ENCODE measurements at regions of chr6 and their contacts with region 1.

Region 1: GRCh38 chr6:80106418-80107235 is at the start of gene BCKDHB:
- DNase-seq: peak; percentile 99
- H3K4me3 ChIP-seq: peak within 1 kb of the TSS; percentile 94
- H3K27ac ChIP-seq: peak within 1 kb of the TSS; percentile 46
- H3K4me1 ChIP-seq: peaks cover 14% of the 10 kb centered on the region
- CTCF ChIP-seq: no peak
- total RNA-seq, gene BCKDHB: 25.0 and 30.3 TPM in 2 replicates

Region 2: DNA sequence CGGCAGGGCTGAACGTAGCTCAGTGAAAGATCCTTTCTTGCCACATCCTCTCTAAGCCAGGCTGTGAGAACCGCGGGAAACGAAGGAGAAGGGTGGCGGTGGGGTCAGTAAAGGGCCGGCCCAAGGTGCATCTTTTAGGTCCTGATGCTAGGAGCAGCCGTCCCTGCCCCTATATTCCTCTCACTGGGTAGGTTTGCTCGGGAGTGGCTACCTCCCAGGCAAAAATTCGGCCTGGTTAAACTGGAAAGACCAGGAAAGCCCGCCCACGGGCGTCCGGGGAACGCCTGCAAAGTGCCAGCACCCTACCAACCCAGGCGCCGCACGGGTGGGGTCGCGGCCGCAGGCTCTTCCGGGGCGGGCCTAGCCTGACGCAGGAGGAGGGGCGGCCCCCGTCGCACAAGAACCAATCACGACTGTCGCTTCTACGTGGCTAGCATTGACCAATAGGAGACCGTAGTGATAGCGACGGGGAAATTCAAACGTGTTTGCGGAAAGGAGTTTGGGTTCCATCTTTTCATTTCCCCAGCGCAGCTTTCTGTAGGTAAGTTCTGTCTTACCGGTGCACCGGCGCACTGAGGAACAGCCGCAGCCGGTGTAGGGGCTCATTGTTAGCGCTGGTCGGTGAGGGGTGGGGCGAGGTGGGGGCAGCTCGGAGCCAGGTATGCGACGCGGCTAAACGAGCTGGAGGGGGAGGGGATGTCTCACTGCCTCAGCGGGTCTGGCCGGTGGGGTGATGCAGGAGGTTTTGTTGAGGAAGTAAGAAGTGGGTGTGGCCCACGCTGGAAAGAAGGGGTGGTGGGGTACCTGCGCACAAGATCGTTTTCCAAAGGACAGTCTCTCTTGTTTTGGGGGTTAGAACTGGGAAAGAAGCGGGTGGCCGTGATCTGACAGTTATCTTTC is 102.2 kb before region 1 on chr6 and contains the start of gene TTK:
- CTCF ChIA-PET with region 1: no interaction called
- POLR2A ChIA-PET with region 1: interaction called, 12 read pairs
- intact Hi-C with region 1: loop called (anchors 1 kb)
- DNase-seq: peak; percentile 97
- H3K4me3 ChIP-seq: peak within 1 kb of the TSS; percentile 93
- H3K27ac ChIP-seq: peak within 1 kb of the TSS; percentile 78
- H3K4me1 ChIP-seq: peaks cover 29% of the 10 kb centered on the region
- CTCF ChIP-seq: no peak
- total RNA-seq, gene TTK: 43.2 and 49.5 TPM in 2 replicates